ENCODE measurements at regions of chr12 and their contacts with region 1.

Region 1: DNA sequence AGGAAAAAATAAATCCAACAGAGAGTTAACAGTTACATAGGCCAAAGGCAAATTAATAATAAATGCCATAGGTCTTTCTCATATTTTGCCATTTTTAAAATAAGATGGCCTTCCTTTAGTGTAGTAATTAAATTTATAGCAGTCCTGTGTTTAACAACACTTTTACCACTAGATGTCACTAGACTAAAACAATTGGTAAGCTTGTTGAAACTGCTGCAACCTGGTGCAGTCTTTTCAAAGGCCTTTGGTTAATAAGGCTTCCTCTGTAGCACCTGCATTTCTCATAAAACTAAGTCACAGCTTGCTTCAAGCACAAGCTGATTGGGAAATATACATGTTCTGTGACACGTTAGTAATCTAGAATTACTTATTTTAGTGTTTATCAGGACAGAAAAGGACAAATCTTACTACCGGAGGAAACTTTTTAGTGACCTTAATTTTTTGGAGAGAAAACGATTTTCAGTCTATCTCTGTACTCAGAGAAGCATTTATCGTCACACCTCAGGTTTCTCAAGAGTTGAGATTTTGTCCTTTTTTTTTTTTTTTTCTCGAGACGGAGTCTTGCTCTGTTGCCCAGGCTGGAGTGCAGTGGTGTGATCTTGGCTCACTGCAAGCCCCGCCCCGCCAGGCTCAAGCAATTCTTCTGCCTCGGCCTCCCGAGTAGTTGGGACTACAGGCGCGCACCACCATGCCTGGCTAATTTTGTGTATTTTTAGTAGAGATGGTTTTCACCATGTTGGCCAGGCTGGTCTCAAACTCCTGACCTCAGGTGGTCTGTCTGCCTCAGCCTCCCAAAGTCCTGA is 20.0 kb downstream of the BORCS5 start:
- DNase-seq: no peak
- H3K4me3 Mint-ChIP-seq: no peak overlapping the region
- H3K27ac Mint-ChIP-seq: peak overlapping the region; percentile 59
- H3K4me1 Mint-ChIP-seq: peaks cover 34% of the 10 kb centered on the region
- H3K27me3 Mint-ChIP-seq: no peaks in the 10 kb centered on the region

Region 2: GRCh38 chr12:12056951-12057350 is 319.9 kb before region 1 on chr12:
- intact Hi-C with region 1: no loop called
- DNase-seq: no peak
- H3K4me3 Mint-ChIP-seq: no peak overlapping the region
- H3K27ac Mint-ChIP-seq: no peak overlapping the region
- H3K4me1 Mint-ChIP-seq: no peaks in the 10 kb centered on the region
- H3K27me3 Mint-ChIP-seq: peaks cover 4% of the 10 kb centered on the region

Region 3: DNA sequence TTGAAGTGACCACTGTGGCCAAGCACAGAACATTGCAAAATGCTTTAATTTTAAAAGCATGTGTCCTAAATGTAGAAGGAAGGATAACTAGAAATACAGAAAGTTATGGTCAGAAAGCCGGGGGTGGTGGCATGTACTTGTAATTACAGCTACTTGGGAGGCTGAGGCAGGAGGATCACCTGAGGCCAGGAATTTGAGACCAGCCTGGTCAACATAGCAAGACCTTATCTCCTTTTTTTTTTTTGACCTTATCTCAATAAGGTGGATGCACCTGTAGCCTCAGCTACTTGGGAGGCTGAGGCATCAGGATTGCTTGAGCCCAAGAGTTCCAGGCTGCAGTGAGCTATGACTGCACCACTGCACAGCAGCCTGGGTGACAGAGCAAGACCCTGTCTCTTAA is 13.5 kb after region 1 on chr12:
- intact Hi-C with region 1: loop called (anchors 1 kb)
- DNase-seq: no peak
- H3K4me3 Mint-ChIP-seq: no peak overlapping the region
- H3K27ac Mint-ChIP-seq: no peak overlapping the region
- H3K4me1 Mint-ChIP-seq: peaks cover 25% of the 10 kb centered on the region
- H3K27me3 Mint-ChIP-seq: no peaks in the 10 kb centered on the region

Region 4: DNA sequence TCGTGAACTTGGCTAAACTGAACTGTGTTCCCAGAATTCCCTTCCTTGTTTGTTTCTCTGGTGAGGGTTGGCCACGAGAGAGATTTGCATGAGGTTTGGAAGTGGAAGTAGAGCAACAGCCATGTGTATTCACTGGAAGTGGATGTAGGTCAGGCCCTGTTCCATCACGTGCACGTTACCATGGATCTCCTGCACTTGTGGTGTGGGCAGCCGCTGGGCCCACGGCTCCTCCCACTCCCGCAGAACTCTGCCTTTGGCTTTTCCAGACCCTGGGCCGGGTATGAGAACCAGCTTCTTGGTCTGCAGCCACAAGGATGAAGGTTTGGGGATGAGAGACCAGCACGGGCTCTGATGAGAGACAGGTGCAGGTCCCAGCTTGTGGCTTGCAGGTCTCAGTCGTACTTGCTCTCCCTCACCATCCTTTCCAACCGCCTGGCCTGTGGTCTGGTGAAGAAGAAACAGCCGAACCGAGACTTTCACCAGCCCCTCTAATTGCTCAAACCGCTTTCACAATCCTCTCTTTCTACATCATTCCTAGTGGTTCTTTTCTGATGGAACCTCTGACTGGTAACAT is 90.9 kb after region 1 on chr12:
- intact Hi-C with region 1: no loop called
- DNase-seq: no peak
- H3K4me3 Mint-ChIP-seq: peak overlapping the region; percentile 33
- H3K27ac Mint-ChIP-seq: peak overlapping the region; percentile 82
- H3K4me1 Mint-ChIP-seq: peaks cover 72% of the 10 kb centered on the region
- H3K27me3 Mint-ChIP-seq: no peaks in the 10 kb centered on the region

Region 5: DNA sequence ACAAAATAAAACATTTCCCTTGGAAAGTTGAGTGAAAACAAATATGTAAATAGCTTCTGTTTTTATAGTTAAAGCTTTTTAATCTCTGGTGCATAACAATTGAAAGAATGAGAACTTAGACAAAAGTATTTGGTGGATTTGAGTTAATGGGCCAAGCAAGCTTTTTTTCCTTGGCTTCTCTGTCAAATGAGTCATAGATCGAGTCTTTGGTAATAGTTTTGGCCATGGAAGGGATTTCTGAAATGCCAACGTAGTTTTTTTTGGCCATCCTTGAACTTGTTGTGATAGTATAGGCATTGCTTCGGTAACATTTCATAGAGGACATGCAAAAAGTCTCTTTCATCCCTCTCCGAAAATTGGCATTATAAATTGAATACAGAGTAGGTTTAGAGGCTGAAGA is 284.2 kb after region 1 on chr12:
- intact Hi-C with region 1: loop called (anchors 1 kb)
- DNase-seq: no peak
- H3K4me3 Mint-ChIP-seq: no peak overlapping the region
- H3K27ac Mint-ChIP-seq: no peak overlapping the region
- H3K4me1 Mint-ChIP-seq: peaks cover 3% of the 10 kb centered on the region
- H3K27me3 Mint-ChIP-seq: no peaks in the 10 kb centered on the region

Region 6: GRCh38 chr12:12704593-12705230 is 327.9 kb after region 1 on chr12:
- intact Hi-C with region 1: loop called (anchors 1 kb)
- DNase-seq: no peak
- H3K4me3 Mint-ChIP-seq: no peak overlapping the region
- H3K27ac Mint-ChIP-seq: peak overlapping the region; percentile 36
- H3K4me1 Mint-ChIP-seq: peaks cover 21% of the 10 kb centered on the region
- H3K27me3 Mint-ChIP-seq: no peaks in the 10 kb centered on the region

Measured in activated T-helper 2 cell treated with anti-CD3 and anti-CD28 coated beads, Interferon-gamma antibody, Interleukin-2, Interleukin-4, amounts not matched to agents 10 μg/mL and 5 μg/mL and 100 μg/mL, durations not matched to agents 14 hours and 24 hours and 36 hours (primary cell).